Mammary epithelial cell (primary cell): ENCODE measurements at regions of chr6 and their contacts with region 1.

Region 1: DNA sequence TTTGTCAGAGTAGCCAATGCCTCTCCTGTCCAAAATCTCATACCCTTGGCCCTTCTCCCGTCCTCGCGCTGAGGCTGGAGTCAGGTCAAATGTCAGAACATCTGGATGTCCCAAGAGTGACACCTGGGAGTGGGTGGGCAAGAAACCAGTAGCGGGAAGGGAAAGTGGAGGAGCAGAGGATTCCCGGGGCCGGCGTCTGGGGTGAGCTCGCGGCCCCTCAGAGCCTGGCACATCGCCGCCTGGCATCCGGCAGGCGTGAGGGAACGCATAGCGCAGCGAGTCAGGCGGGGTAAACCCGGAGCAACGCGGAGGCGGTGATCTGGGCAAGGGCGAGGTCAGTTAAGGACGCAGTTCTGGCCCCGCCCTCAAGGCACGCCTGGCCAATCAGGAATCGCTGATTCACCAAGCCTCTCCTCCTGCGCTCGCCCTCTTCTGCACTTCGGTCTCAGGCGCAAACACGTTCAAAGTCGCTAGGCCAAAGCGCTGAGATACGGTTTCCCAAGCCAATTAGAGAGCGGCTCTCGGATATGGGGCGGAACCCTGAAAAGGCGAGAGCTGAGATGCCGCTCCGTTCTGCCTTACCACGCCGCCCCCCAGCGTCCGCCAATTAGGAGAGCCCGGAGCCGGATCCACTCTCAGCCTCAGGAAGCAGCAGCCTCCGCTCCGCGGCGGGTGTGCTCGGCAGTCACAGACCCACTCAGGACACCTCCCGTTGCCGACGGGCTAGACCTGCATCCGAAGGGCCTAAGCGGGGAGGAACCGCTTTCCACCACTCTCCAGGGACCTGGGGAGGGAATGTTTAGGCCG is 22.5 kb downstream of the VPS52 start:
- DNase-seq: peak; percentile 99
- H3K4me3 ChIP-seq: peak overlapping the region; percentile 52 to 78 (median 63)
- H3K27ac ChIP-seq: peak overlapping the region; percentile 68
- H3K4me1 ChIP-seq: peaks cover 26% of the 10 kb centered on the region
- H3K27me3 ChIP-seq: no peaks in the 10 kb centered on the region
- CTCF ChIP-seq: peak in 1 of 2 donors; percentile 19

Region 2: GRCh38 chr6:32393665-32394420 is 855.3 kb before region 1 on chr6:
- CTCF ChIA-PET with region 1: no interaction called
- dilution Hi-C with region 1: no loop called
- in situ Hi-C with region 1: no loop called
- intact Hi-C with region 1: no loop called
- DNase-seq: peak; percentile 33
- H3K4me3 ChIP-seq: peak overlapping the region in 2 of 3 experiments; percentile 5 to 22
- H3K27ac ChIP-seq: peak overlapping the region; percentile 80
- H3K4me1 ChIP-seq: peaks cover 24% of the 10 kb centered on the region
- H3K27me3 ChIP-seq: no peaks in the 10 kb centered on the region
- CTCF ChIP-seq: no peak

Region 3: GRCh38 chr6:32894080-32895005 is 354.8 kb before region 1 on chr6:
- CTCF ChIA-PET with region 1: no interaction called
- dilution Hi-C with region 1: no loop called
- in situ Hi-C with region 1: loop called in 1 of 2 experiments (anchors 25 kb)
- intact Hi-C with region 1: loop called (anchors 10 kb)
- DNase-seq: peak; percentile 91
- H3K4me3 ChIP-seq: peak overlapping the region; percentile 72 to 84 (median 76)
- H3K27ac ChIP-seq: peak overlapping the region; percentile 65
- H3K4me1 ChIP-seq: peaks cover 13% of the 10 kb centered on the region
- H3K27me3 ChIP-seq: no peaks in the 10 kb centered on the region
- CTCF ChIP-seq: no peak

Region 4: DNA sequence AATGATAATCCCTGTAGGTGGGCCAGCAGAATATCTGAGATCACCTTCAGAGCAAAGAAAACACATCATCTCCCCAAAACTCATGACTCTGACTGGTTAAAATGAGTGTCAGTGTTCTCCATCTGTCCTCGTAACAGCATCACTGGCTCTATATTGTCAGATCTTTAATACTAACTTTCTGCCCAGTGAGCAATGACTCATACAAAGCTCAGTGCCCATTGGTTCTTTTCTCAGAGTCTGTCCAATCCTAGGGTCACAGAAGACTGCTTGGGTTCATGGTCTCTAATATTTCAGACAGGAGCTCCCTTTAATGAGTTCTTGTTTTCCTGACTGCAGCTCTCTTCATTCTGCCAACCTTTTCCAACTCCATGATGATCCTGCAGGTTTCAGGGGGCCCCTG is 137.0 kb before region 1 on chr6:
- CTCF ChIA-PET with region 1: no interaction called
- dilution Hi-C with region 1: no loop called
- in situ Hi-C with region 1: loop called in 1 of 2 experiments (anchors 10 kb)
- intact Hi-C with region 1: no loop called
- DNase-seq: peak; percentile 36
- H3K4me3 ChIP-seq: no peak overlapping the region
- H3K27ac ChIP-seq: no peak overlapping the region
- H3K4me1 ChIP-seq: no peaks in the 10 kb centered on the region
- H3K27me3 ChIP-seq: peaks cover 6% of the 10 kb centered on the region
- CTCF ChIP-seq: no peak

Region 5: GRCh38 chr6:33147807-33148666 is 101.1 kb before region 1 on chr6:
- CTCF ChIA-PET with region 1: interaction called, 3 read pairs
- dilution Hi-C with region 1: no loop called
- in situ Hi-C with region 1: no loop called
- intact Hi-C with region 1: loop called (anchors 2 kb)
- DNase-seq: peak; percentile 17
- H3K4me3 ChIP-seq: no peak overlapping the region
- H3K27ac ChIP-seq: no peak overlapping the region
- H3K4me1 ChIP-seq: no peaks in the 10 kb centered on the region
- H3K27me3 ChIP-seq: no peaks in the 10 kb centered on the region
- CTCF ChIP-seq: peak; percentile 70 to 79

Region 6: GRCh38 chr6:33172688-33173534 is 76.2 kb before region 1 on chr6:
- CTCF ChIA-PET with region 1: interaction called, 4 read pairs
- dilution Hi-C with region 1: no loop called
- in situ Hi-C with region 1: no loop called
- intact Hi-C with region 1: loop called (anchors 1 kb)
- DNase-seq: peak; percentile 29
- H3K4me3 ChIP-seq: no peak overlapping the region
- H3K27ac ChIP-seq: no peak overlapping the region
- H3K4me1 ChIP-seq: no peaks in the 10 kb centered on the region
- H3K27me3 ChIP-seq: no peaks in the 10 kb centered on the region
- CTCF ChIP-seq: peak; percentile 78 to 89

Region 7: GRCh38 chr6:33192671-33193602 is 56.2 kb before region 1 on chr6:
- CTCF ChIA-PET with region 1: no interaction called
- dilution Hi-C with region 1: no loop called
- in situ Hi-C with region 1: no loop called
- intact Hi-C with region 1: no loop called
- DNase-seq: no peak
- H3K4me3 ChIP-seq: no peak overlapping the region
- H3K27ac ChIP-seq: no peak overlapping the region
- H3K4me1 ChIP-seq: no peaks in the 10 kb centered on the region
- H3K27me3 ChIP-seq: peaks cover 10% of the 10 kb centered on the region
- CTCF ChIP-seq: no peak

Region 8: GRCh38 chr6:33271458-33272274 is 22.5 kb after region 1 on chr6 and contains the starts of genes RPS18 and VPS52:
- CTCF ChIA-PET with region 1: interaction called, 3 read pairs
- dilution Hi-C with region 1: no loop called
- in situ Hi-C with region 1: no loop called
- intact Hi-C with region 1: loop called (anchors 1 kb)
- DNase-seq: peak; percentile 96
- H3K4me3 ChIP-seq: peak within 1 kb of the TSS; percentile 73 to 82 (median 75)
- H3K27ac ChIP-seq: peak within 1 kb of the TSS; percentile 91
- H3K4me1 ChIP-seq: peaks cover 39% of the 10 kb centered on the region
- H3K27me3 ChIP-seq: no peaks in the 10 kb centered on the region
- CTCF ChIP-seq: peak in 1 of 2 donors; percentile 5
- total RNA-seq, gene RPS18: 2,176 to 2,484 TPM
- total RNA-seq, gene VPS52: 34.0 to 40.2 TPM

Region 9: GRCh38 chr6:33425668-33426577 is 176.8 kb after region 1 on chr6:
- CTCF ChIA-PET with region 1: no interaction called
- dilution Hi-C with region 1: no loop called
- in situ Hi-C with region 1: no loop called
- intact Hi-C with region 1: no loop called
- DNase-seq: peak; percentile 82
- H3K4me3 ChIP-seq: peak overlapping the region; percentile 55 to 72 (median 68)
- H3K27ac ChIP-seq: peak overlapping the region; percentile 68
- H3K4me1 ChIP-seq: peaks cover 42% of the 10 kb centered on the region
- H3K27me3 ChIP-seq: no peaks in the 10 kb centered on the region
- CTCF ChIP-seq: peak; percentile 36 to 81

Region 10: DNA sequence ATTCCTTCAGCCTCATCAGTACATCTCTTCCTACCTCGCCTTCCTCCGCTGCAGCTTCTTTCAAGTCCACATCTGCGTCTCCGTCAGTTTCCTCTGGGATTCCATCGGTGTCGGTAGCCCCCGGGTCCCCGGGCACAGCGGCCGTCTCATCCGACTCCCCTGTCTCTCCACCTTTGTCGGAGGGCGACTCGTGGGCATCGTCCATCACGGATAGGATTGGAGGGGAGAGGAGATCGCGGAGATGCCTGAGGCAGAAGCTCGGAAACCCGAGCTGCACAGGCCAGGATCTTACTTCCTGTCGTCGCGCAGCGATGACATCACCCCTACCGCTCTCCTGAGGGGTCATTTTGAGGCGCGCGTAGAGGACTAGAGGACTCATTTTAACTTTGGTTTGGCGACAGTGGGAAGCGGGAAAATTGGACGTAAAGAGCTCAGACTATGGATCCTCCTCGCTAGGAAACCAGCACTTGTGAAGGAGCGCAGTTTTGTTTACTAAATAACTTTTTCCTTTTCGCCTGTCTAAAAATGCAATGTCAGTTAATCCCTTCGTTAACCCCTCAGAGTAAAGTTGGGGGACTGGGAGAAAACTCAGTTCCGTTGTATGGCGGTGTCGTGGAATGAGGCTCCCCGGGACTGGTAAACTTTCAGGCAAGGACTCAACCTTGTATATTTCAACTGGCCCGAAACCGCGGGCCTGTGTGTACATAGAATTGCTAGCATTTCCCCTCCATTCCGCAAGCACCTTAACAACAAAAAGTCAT is 1638.8 kb after region 1 on chr6 and contains the start of gene TAF11:
- CTCF ChIA-PET with region 1: no interaction called
- dilution Hi-C with region 1: no loop called
- in situ Hi-C with region 1: no loop called
- intact Hi-C with region 1: no loop called
- DNase-seq: peak; percentile 92
- H3K4me3 ChIP-seq: peak within 1 kb of the TSS; percentile 61 to 98 (median 78)
- H3K27ac ChIP-seq: peak within 1 kb of the TSS; percentile 89
- H3K4me1 ChIP-seq: peaks cover 14% of the 10 kb centered on the region
- H3K27me3 ChIP-seq: no peaks in the 10 kb centered on the region
- CTCF ChIP-seq: no peak
- total RNA-seq, gene TAF11: 11.0 to 16.4 TPM